ENCODE measurements at regions of chr19 and their contacts with region 1.

Region 1: GRCh38 chr19:10388957-10389356 is 8.6 kb upstream of the TYK2 start:
- DNase-seq: peak; percentile 96
- ATAC-seq: peak; percentile 73
- H3K4me3 Mint-ChIP-seq: no peak overlapping the region
- H3K27ac Mint-ChIP-seq: no peak overlapping the region
- H3K4me1 Mint-ChIP-seq: peaks cover 5% of the 10 kb centered on the region; the same call in 1 of the 2 replicates
- H3K27me3 Mint-ChIP-seq: peaks cover 3% of the 10 kb centered on the region; the same call in 1 of the 2 replicates
- CTCF ChIP-seq: peak; percentile 90

Region 2: DNA sequence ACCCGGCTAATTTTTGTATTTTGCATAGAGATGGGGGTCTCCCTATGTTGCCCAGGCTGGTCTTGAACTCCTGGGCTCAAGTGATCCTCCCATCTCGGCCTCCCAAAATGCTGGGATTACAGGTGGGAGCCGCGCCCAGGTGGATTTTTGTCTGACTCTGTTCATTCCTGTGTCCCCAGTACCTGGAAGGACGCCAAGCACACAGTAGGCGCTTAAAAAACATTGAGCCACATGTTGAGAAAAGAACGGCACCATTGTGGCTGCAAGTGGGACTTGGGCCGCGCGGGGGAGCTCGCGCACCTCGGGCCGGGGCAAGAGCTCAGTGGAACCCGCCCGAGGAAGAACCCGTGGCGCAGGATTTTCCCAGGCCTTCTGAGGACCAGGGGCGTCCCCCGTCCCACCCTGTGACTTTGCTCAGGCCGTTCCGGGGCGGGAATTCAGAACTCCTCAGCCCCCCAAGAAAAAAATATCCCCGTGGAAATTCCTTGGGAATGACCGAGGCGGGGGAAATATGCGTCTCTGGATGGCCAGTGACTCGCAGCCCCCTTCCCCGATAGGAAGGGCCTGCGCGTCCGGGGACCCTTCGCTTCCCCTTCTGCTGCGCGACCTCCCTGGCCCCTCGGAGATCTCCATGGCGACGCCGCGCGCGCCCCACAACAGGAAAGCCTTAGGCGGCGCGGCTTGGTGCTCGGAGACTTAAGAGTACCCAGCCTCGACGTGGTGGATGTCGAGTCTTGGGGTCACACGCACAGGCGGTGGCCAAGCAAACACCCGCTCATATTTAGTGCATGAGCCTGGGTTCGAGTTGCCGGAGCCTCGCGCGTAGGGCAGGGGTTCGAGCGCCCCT is 119.4 kb before region 1 on chr19:
- CTCF ChIA-PET with region 1: interaction called, 163 read pairs
- POLR2A ChIA-PET with region 1: interaction called, 7 read pairs
- DNase-seq: peak; percentile 93
- ATAC-seq: peak; percentile 69
- H3K4me3 Mint-ChIP-seq: peak overlapping the region; percentile 68
- H3K27ac Mint-ChIP-seq: no peak overlapping the region
- H3K4me1 Mint-ChIP-seq: 0 out of 2 replicates have a peak, but pooled peaks cover 4% of the 10 kb centered on the region
- H3K27me3 Mint-ChIP-seq: peaks cover 46% of the 10 kb centered on the region
- CTCF ChIP-seq: peak; percentile 84

Region 3: DNA sequence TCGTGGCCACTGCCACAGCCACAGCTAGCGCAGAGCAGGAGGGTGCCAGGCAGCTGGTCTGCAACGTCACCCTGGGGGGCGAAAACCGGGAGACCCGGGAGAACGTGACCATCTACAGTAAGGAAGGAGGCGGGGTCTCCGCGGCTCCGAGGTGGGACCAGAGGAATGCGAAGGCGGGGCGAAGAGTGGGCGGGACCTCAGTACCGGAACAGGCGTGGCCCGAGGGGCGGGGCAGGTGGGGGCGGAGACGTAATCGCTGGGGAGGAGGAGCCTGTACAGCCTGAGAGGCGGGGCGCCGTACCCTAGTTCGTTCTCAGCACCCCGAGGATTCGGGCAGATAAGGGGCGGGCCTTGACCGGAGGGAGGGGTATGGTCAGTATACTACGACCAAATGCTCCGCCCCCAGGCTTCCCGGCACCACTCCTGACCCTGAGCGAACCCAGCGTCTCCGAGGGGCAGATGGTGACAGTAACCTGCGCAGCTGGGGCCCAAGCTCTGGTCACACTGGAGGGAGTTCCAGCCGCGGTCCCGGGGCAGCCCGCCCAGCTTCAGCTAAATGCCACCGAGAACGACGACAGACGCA is 96.7 kb before region 1 on chr19:
- CTCF ChIA-PET with region 1: interaction called, 44 read pairs
- POLR2A ChIA-PET with region 1: no interaction called
- DNase-seq: peak; percentile 99
- ATAC-seq: peak; percentile 73
- H3K4me3 Mint-ChIP-seq: peak overlapping the region; percentile 82
- H3K27ac Mint-ChIP-seq: no peak overlapping the region
- H3K4me1 Mint-ChIP-seq: peaks cover 39% of the 10 kb centered on the region
- H3K27me3 Mint-ChIP-seq: peaks cover 98% of the 10 kb centered on the region
- CTCF ChIP-seq: no peak

Region 4: GRCh38 chr19:10332955-10333757 is 55.8 kb before region 1 on chr19 and contains the start of gene RAVER1:
- CTCF ChIA-PET with region 1: interaction called, 35 read pairs
- POLR2A ChIA-PET with region 1: interaction called, 4 read pairs
- DNase-seq: peak; percentile 98
- ATAC-seq: peak; percentile 91
- H3K4me3 Mint-ChIP-seq: peak within 1 kb of the TSS; percentile 93
- H3K27ac Mint-ChIP-seq: peak within 1 kb of the TSS; percentile 90
- H3K4me1 Mint-ChIP-seq: peaks cover 16% of the 10 kb centered on the region
- H3K27me3 Mint-ChIP-seq: peaks cover 10% of the 10 kb centered on the region
- CTCF ChIP-seq: no peak
- total RNA-seq, gene RAVER1: 85.8 to 87.4 TPM (median 86.9 TPM) in 3 replicates

Region 5: DNA sequence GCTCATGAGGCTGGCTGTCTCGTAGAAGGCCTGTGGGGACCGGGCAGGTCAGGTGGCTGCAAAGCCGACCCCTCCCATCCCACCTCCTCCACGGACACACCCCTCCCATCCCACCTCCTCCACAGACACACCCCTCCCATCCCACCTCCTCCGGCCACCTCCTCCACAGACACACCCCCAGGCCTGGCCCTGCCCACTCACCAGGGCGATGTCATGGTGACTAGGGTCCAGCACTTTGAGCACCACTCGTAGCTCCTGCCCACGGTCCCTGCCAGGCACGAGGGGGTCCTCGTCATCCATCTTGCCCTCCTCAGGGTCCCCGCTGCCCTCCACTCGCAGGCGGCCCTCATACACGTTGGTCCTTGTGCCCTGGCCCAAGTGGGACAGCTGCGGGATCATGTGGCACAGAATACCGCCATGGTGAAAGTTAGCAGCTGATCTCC is 27.4 kb before region 1 on chr19:
- CTCF ChIA-PET with region 1: interaction called, 11 read pairs
- POLR2A ChIA-PET with region 1: no interaction called
- DNase-seq: no peak
- ATAC-seq: peak; percentile 60
- H3K4me3 Mint-ChIP-seq: no peak overlapping the region
- H3K27ac Mint-ChIP-seq: no peak overlapping the region
- H3K4me1 Mint-ChIP-seq: no peaks in the 10 kb centered on the region
- H3K27me3 Mint-ChIP-seq: no peaks in the 10 kb centered on the region
- CTCF ChIP-seq: no peak

Region 6: DNA sequence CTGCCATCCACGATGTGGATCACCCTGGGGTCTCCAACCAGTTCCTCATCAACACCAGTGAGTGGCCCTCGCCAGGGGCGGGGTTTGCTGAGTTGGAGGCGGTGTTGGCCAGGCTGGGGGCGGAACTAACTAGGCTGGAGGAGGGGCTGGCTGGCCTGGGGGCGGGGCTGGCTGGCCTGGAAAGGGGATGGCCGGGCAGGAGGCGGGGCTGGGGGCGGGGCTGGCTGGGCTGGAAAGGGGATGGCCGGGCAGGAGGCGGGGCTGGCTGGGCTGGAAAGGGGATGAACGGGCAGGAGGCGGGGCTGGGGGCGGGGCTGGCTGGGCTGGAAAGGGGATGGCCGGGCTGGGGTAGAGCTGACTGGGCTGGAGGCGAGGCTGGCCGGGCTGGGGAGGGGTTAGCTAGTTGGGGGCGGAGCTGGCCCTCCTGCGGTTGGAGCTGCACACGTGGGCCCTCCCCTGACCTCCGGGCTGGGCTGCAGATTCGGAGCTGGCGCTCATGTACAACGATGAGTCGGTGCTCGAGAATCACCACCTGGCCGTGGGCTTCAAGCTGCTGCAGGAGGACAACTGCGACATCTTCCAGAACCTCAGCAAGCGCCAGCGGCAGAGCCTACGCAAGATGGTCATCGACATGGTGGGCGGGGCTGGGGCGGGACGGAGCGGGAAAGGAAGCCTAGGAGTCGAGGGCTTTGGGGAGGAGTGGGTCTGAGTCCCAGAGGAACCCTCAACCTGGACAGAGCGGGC is 72.3 kb after region 1 on chr19:
- CTCF ChIA-PET with region 1: interaction called, 10 read pairs
- POLR2A ChIA-PET with region 1: no interaction called
- DNase-seq: peak; percentile 99
- ATAC-seq: peak; percentile 96
- H3K4me3 Mint-ChIP-seq: peak overlapping the region; percentile 69
- H3K27ac Mint-ChIP-seq: peak overlapping the region; percentile 95; the same call in 1 of the 2 replicates
- H3K4me1 Mint-ChIP-seq: peaks cover 3% of the 10 kb centered on the region; the same call in 1 of the 2 replicates
- H3K27me3 Mint-ChIP-seq: peaks cover 19% of the 10 kb centered on the region
- CTCF ChIP-seq: no peak

Region 7: GRCh38 chr19:10602330-10603083 is 213.6 kb after region 1 on chr19:
- CTCF ChIA-PET with region 1: no interaction called
- POLR2A ChIA-PET with region 1: no interaction called
- DNase-seq: peak; percentile 91
- ATAC-seq: peak; percentile 95
- H3K4me3 Mint-ChIP-seq: peak overlapping the region; percentile 84
- H3K27ac Mint-ChIP-seq: no peak overlapping the region
- H3K4me1 Mint-ChIP-seq: peaks cover 12% of the 10 kb centered on the region
- H3K27me3 Mint-ChIP-seq: peaks cover 18% of the 10 kb centered on the region
- CTCF ChIP-seq: no peak

Measured in WTC11 (cell line).